Activated CD8-positive, alpha-beta T cell treated with anti-CD3 and anti-CD28 coated beads, Interleukin-2, amount 10 ng/mL, durations not matched to agents 7 days and 5 days (primary cell): ENCODE measurements at regions of chr3 and their contacts with region 1.

Region 1: DNA sequence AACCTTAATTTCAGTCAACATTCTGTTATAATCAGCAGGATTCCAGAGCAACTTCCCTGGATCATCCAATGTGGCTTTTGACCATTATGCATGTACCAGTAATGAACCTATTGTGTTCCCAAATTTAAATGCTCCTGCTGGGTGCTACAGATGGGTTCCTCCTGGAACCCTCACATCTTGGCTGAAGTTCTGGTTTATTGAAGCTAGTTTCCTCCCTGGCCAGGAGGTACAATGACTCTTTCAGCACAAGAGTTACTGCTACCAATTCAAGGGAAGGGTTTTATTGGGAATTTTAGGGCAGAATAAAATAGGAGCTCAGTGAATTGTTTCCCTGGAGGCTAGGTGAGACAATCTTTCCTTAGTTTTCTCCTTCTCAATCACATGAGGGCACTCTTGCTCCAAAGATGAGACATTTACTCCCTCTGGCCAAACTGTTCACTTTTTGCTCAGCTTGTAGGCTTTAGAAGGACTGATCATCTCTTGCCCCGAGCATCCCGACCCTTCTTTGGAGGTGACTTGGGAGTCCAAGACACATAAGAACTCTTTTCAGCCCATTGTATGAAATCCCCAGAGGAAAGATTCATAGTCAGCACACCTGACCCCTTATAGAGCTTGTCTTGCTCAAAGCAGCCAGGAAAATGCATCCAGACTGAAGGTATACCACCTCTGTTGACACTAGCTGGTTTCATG is 8.8 kb upstream of the NPHP3 start:
- DNase-seq: no peak
- ATAC-seq: no peak
- H3K4me3 Mint-ChIP-seq: no peak overlapping the region
- H3K27ac Mint-ChIP-seq: no peak overlapping the region
- H3K4me1 Mint-ChIP-seq: no peaks in the 10 kb centered on the region
- H3K27me3 Mint-ChIP-seq: peaks cover 39% of the 10 kb centered on the region

Region 2: GRCh38 chr3:132822266-132822665 is 91.2 kb after region 1 on chr3:
- CTCF ChIA-PET with region 1: no interaction called
- POLR2A ChIA-PET with region 1: no interaction called
- DNase-seq: no peak
- ATAC-seq: no peak
- H3K4me3 Mint-ChIP-seq: no peak overlapping the region
- H3K27ac Mint-ChIP-seq: no peak overlapping the region
- H3K4me1 Mint-ChIP-seq: no peaks in the 10 kb centered on the region
- H3K27me3 Mint-ChIP-seq: peaks cover 2% of the 10 kb centered on the region

Region 3: DNA sequence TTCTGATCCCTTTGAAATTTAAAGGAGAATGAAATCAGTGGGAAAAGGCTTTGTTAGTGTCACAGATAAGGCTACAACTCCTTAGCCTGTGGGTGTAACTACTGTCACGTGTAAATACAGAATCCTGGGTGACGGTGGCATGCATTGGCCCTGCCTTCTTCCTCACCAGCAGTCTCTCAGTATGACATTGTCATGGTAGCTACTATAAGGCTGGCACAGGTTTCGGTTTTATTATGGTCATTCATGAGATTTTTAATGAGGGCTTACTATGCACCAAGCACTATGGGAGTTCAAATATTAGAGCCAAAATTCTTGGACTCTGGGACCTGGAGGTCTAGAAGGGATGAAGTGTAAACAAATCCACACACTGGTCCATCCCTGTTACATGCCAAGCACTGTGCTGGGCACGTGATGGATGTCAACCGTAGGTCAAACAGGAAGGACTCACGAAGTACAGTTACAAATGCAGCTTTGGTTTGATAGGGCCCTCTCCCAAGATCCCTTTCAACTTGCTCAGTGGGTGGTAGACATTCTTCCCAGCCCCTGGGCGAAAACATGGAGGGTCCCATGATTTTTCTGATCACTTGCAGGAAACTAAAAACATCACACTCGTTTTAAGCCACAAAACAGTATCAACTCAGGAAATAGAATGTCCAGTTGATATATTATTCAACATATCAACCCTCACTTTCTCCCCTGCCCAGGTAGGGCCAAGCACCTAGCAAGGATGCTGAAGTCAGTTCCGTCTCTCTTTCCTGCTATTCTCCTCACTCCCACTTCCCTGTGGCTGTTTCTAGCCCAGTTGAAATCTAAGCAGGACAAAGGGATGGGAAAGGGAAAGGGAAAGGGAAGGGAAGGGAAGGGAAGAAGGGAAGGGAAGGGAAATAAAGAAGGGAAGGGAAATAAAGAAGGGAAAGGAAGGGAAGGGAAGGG is 694.2 kb after region 1 on chr3:
- CTCF ChIA-PET with region 1: interaction called, 38 read pairs
- POLR2A ChIA-PET with region 1: no interaction called
- DNase-seq: no peak
- ATAC-seq: no peak
- H3K4me3 Mint-ChIP-seq: no peak overlapping the region
- H3K27ac Mint-ChIP-seq: no peak overlapping the region
- H3K4me1 Mint-ChIP-seq: peaks cover 2% of the 10 kb centered on the region
- H3K27me3 Mint-ChIP-seq: no peaks in the 10 kb centered on the region

Region 4: DNA sequence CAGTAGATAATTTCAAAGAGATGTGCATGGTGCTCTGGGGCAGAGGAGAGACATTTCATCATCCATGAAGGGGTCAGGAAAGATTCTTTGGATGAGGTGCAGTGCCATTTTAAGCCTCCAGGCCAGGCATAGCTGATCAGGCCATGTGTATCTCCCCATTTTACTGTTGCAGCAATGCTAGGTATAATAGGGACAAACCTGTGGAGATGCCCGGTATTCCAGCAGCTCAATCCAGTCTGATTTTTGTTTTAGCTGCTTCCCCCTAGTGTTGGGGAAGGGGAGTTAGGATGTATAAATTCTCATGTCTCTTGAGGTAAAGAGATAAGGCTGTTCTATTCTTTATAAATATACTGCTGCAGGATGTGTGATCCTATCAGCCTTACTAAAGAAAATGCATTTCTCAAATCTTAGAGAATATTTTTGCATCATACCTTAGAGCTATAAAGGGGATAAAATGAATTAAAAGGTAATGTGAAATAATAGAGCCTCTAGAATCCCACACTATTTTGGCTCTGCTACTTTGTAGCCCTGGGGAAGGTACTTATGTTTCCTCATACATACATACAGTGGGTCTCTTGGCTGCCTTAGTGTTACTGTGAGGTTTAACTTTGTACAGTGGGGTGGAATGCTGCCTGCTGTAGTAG is 847.6 kb after region 1 on chr3:
- CTCF ChIA-PET with region 1: interaction called, 11 read pairs
- POLR2A ChIA-PET with region 1: no interaction called
- DNase-seq: no peak
- ATAC-seq: no peak
- H3K4me3 Mint-ChIP-seq: peak overlapping the region; percentile 68
- H3K27ac Mint-ChIP-seq: peak overlapping the region; percentile 74
- H3K4me1 Mint-ChIP-seq: peaks cover 47% of the 10 kb centered on the region
- H3K27me3 Mint-ChIP-seq: no peaks in the 10 kb centered on the region